Pancreas (tissue), 10 donors: ENCODE measurements at regions of chr6 and their contacts with region 1.

Region 1: GRCh38 chr6:148177589-148178233 is 164.9 kb upstream of the SASH1 start:
- DNase-seq: peak in 5 of 6 donors; percentile 25 to 88 (median 67)
- ATAC-seq: peak; percentile 60 to 74 (median 67)
- H3K4me3 ChIP-seq: no peak overlapping the region
- H3K27ac ChIP-seq: no peak overlapping the region
- H3K4me1 ChIP-seq: no peaks in the 10 kb centered on the region
- H3K27me3 ChIP-seq: no peaks in the 10 kb centered on the region
- CTCF ChIP-seq: peak; percentile 64 to 74 (median 69)

Region 2: GRCh38 chr6:147950623-147950987 is 227.1 kb before region 1 on chr6:
- intact Hi-C with region 1: no loop called
- DNase-seq: no peak
- ATAC-seq: peak in 2 of 4 donors; percentile 30 to 49
- H3K4me3 ChIP-seq: no peak overlapping the region
- H3K27ac ChIP-seq: no peak overlapping the region
- H3K4me1 ChIP-seq: no peaks in the 10 kb centered on the region
- H3K27me3 ChIP-seq: no peaks in the 10 kb centered on the region
- CTCF ChIP-seq: no peak

Region 3: GRCh38 chr6:148004651-148005050 is 173.1 kb before region 1 on chr6:
- intact Hi-C with region 1: no loop called
- DNase-seq: no peak
- ATAC-seq: no peak
- H3K4me3 ChIP-seq: no peak overlapping the region
- H3K27ac ChIP-seq: no peak overlapping the region
- H3K4me1 ChIP-seq: no peaks in the 10 kb centered on the region
- H3K27me3 ChIP-seq: no peaks in the 10 kb centered on the region
- CTCF ChIP-seq: no peak

Region 4: DNA sequence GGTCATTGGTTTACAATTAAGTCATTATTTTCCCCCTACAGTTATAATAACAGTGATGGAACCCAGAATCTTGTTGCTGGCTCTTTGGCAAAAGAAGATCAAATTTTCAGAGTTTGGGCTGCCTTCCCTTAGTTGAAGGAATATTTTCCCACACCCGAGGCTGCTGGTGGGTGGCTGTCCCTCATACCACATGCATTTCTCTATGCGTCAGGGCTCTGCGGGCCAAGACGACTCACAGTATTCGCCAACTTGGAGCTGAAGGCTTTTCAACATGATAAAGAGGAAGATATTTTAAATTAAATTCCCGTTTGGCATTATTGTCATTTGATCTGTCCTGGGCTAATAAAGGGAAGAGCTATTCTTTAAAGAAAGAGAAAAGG is 62.7 kb after region 1 on chr6:
- intact Hi-C with region 1: loop called in 1 of 3 experiments (anchors 10 kb)
- DNase-seq: no peak
- ATAC-seq: peak in 1 of 4 donors; percentile 15
- H3K4me3 ChIP-seq: no peak overlapping the region
- H3K27ac ChIP-seq: no peak overlapping the region
- H3K4me1 ChIP-seq: no peaks in the 10 kb centered on the region
- H3K27me3 ChIP-seq: no peaks in the 10 kb centered on the region
- CTCF ChIP-seq: no peak

Region 5: GRCh38 chr6:148464319-148465010 is 286.8 kb after region 1 on chr6:
- intact Hi-C with region 1: loop called in 1 of 3 experiments (anchors 5 kb)
- DNase-seq: peak in 5 of 6 donors; percentile 30 to 72 (median 50)
- ATAC-seq: peak; percentile 48 to 90 (median 88)
- H3K4me3 ChIP-seq: no peak overlapping the region
- H3K27ac ChIP-seq: no peak overlapping the region
- H3K4me1 ChIP-seq: peaks cover 0 to 4% (median 0%) of the 10 kb centered on the region in 3 donors
- H3K27me3 ChIP-seq: no peaks in the 10 kb centered on the region
- CTCF ChIP-seq: peak; percentile 78 to 88 (median 87)